ENCODE measurements at regions of chr14 and their contacts with region 1.

Region 1: GRCh38 chr14:61403411-61403810 is 82.0 kb downstream of the PRKCH start:
- DNase-seq: no peak
- ATAC-seq: peak; percentile 64
- H3K4me3 Mint-ChIP-seq: peak overlapping the region; percentile 53
- H3K27ac Mint-ChIP-seq: peak overlapping the region; percentile 95
- H3K4me1 Mint-ChIP-seq: peaks cover 81% of the 10 kb centered on the region
- H3K27me3 Mint-ChIP-seq: no peaks in the 10 kb centered on the region
- CTCF ChIP-seq: no peak

Region 2: GRCh38 chr14:61444215-61444768 is 40.9 kb after region 1 on chr14:
- CTCF ChIA-PET with region 1: no interaction called
- POLR2A ChIA-PET with region 1: interaction called, 3 read pairs
- intact Hi-C with region 1: loop called (anchors 5 kb)
- DNase-seq: peak; percentile 93
- ATAC-seq: peak; percentile 88
- H3K4me3 Mint-ChIP-seq: peak overlapping the region; percentile 47
- H3K27ac Mint-ChIP-seq: peak overlapping the region; percentile 99
- H3K4me1 Mint-ChIP-seq: peaks cover 94% of the 10 kb centered on the region
- H3K27me3 Mint-ChIP-seq: no peaks in the 10 kb centered on the region
- CTCF ChIP-seq: no peak